ENCODE measurements at regions of chr21 and their contacts with region 1.

Region 1: DNA sequence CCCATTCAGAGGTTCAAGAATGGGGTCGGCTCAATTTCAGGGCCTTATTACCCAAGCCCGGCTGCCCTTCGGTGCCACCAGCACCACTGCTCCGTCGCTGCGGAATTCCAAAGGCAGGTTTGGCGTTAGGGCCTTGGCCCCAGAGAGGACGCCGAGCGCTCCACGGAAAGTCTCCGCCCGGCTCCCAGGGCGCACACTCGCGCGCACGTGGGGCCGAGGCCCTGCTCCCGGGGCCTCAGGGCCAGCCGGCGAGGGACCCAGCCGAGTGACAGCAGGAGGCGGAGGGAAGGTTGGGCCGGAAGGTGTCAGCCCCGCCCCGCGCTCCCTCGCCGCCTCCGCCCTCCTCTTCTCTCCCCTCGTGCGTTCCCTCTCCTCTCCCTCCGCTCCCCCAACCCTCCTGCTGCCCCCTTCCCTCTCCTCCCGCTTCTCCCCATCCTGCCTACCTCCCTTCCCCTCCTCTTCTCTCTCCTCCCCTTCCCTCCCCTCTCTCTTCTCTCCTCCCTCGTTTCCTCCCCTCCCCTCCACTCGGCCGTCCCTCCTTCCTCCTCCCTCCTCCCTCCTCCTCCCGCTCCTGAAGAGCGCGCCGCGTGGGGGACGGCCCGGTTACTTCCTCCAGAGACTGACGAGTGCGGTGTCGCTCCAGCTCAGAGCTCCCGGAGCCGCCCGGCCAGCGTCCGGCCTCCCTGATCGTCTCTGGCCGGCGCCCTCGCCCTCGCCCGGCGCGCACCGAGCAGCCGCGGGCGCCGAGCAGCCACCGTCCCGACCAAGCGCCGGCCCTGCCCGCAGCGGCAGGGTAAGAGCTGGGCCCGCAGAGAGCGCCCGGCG is at the start of gene ETS2:
- DNase-seq: peak; percentile 97
- H3K4me3 ChIP-seq: peak within 1 kb of the TSS; percentile 71 to 98 (median 96)
- H3K27ac ChIP-seq: peak within 1 kb of the TSS; percentile 92 to 98 (median 94)
- H3K4me1 ChIP-seq: peaks cover 0 to 39% (median 21%) of the 10 kb centered on the region in 4 donors
- H3K27me3 ChIP-seq: no peaks in the 10 kb centered on the region
- CTCF ChIP-seq: peak in 1 of 4 experiments; percentile 2
- EP300 ChIP-seq: no peak
- POLR2A ChIP-seq: peak; percentile 53 to 58
- total RNA-seq, gene ETS2: 32.1 to 112 (median 41.7) TPM

Region 2: DNA sequence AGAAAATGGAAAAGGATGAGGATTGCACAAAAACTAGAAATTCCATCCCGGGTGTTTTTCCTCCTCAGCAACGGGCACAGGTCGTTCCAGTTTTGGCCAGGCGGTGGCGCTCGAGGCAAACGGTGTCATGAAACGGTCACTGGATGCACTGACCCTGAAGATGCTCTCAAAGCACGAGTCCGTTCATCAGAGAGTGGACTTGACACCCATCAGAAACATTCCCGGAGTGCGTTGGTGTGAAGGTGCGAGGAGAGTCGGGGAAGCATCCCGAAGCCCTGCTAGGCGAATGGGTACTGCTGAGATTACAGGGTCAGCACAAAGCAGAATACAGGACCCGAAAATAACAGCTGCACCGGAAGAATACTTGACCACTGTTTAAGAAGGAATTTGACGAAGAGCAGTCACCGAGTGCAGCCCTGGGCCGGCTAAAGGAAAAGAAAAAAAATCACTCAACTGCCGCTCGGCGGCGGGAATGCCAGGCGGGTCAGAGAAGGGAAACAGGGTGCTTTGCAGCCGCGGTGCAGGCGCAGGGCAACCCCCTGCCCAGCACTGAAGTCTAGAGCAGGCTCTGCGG is 71.5 kb before region 1 on chr21:
- intact Hi-C with region 1: loop called (anchors 1 kb)
- DNase-seq: peak; percentile 92
- H3K4me3 ChIP-seq: peak overlapping the region in 3 of 4 donors; percentile 11 to 40 (median 38)
- H3K27ac ChIP-seq: peak overlapping the region; percentile 55 to 76 (median 75)
- H3K4me1 ChIP-seq: peaks cover 0 to 9% (median 6%) of the 10 kb centered on the region in 4 donors
- H3K27me3 ChIP-seq: no peaks in the 10 kb centered on the region
- CTCF ChIP-seq: peak; percentile 84 to 93 (median 90)
- EP300 ChIP-seq: no peak
- POLR2A ChIP-seq: no peak

Region 3: GRCh38 chr21:38755681-38756371 is 49.7 kb before region 1 on chr21:
- intact Hi-C with region 1: loop called (anchors 1 kb)
- DNase-seq: peak; percentile 86
- H3K4me3 ChIP-seq: no peak overlapping the region
- H3K27ac ChIP-seq: peak overlapping the region; percentile 64 to 89 (median 76)
- H3K4me1 ChIP-seq: peaks cover 0 to 76% (median 57%) of the 10 kb centered on the region in 4 donors
- H3K27me3 ChIP-seq: no peaks in the 10 kb centered on the region
- CTCF ChIP-seq: no peak
- EP300 ChIP-seq: peak in 1 of 4 donors; percentile 17
- POLR2A ChIP-seq: no peak

Region 4: DNA sequence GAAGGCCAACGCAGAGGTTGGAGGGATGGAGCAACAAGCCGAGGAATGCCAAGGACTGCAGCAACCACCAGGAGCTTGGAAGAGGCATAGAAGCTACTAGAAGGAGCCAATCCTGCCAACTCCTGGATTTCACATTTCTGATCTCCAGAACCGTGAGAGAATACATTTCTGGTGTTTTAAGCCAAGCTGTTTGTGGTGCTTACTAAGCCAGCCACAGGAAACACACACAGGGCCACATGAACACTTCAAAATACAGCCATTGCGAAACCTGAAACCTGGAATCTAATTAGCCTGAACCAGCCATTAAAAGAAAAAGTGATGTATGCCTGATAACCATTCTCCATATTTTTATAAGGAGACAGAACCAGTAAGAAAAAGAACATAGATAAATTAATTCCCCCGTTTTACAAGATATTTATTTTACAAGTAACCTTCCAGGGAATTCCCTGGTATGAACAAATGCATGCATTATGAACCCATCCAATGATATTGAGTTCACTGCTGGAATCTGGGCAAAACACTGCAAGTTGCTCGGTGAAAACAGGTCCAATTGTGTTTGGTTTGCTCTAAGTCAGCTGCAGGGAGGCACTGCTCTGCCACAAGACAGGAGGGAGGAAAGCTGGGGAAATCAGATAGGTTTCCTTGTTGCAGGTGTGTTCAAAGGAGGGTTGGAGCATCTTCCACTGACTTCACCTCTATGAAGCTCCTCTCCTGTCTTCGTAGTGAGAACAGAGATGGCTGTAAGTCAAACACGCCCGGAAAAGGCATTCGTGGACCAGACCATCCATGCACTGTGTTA is 70.4 kb after region 1 on chr21:
- intact Hi-C with region 1: no loop called
- DNase-seq: no peak
- H3K4me3 ChIP-seq: no peak overlapping the region
- H3K27ac ChIP-seq: no peak overlapping the region
- H3K4me1 ChIP-seq: peaks cover 0 to 5% (median 0%) of the 10 kb centered on the region in 4 donors
- H3K27me3 ChIP-seq: no peaks in the 10 kb centered on the region
- CTCF ChIP-seq: no peak
- EP300 ChIP-seq: no peak
- POLR2A ChIP-seq: no peak

Region 5: DNA sequence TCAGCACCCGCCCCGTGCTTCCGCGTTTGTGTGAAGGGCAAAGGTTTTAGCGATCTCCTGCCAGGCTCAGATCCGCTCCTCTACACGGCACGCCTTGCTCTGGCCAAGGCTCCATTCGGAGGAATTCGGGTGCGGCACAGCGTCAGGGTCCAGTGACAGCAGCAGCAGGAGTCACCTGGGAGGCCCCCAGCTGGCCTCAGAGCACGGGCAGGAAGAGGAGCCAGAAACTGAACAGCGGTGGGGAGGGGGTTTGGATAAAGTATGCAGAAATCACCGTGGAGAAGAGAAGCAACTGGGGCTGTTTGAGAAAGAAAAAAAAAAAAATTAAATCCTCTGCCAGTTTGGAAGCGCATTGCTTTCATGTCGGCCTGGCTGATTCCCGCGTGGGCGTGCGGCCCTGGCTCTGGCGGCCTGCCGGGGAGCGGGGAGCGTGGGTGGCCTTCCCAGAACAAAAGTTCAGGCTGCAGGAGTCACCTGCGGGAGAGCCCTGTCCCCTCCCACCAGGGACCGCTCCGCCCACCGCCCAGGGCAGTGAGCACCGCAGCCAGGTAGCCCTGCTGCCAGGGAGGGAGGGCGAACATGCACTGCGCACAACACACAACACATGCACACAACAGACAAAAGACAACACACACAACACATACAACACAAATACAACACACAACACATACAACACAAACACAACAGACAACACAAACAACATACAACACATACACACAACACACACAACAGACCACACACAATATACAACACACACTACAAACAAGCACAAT is 107.8 kb after region 1 on chr21:
- intact Hi-C with region 1: loop called (anchors 5 kb)
- DNase-seq: peak; percentile 91
- H3K4me3 ChIP-seq: peak overlapping the region in 3 of 4 donors; percentile 11 to 17 (median 16)
- H3K27ac ChIP-seq: peak overlapping the region; percentile 54 to 82 (median 79)
- H3K4me1 ChIP-seq: peaks cover 0 to 33% (median 23%) of the 10 kb centered on the region in 4 donors
- H3K27me3 ChIP-seq: no peaks in the 10 kb centered on the region
- CTCF ChIP-seq: no peak
- EP300 ChIP-seq: no peak
- POLR2A ChIP-seq: peak in 1 of 2 donors; percentile 49

Region 6: GRCh38 chr21:39125752-39126485 is 320.4 kb after region 1 on chr21:
- intact Hi-C with region 1: loop called (anchors 1 kb)
- DNase-seq: peak; percentile 78
- H3K4me3 ChIP-seq: no peak overlapping the region
- H3K27ac ChIP-seq: peak overlapping the region in 3 of 4 donors; percentile 14 to 51 (median 45)
- H3K4me1 ChIP-seq: peaks cover 4 to 18% (median 9%) of the 10 kb centered on the region in 4 donors
- H3K27me3 ChIP-seq: no peaks in the 10 kb centered on the region
- CTCF ChIP-seq: peak; percentile 41 to 67 (median 60)
- EP300 ChIP-seq: no peak
- POLR2A ChIP-seq: no peak

Measured in sigmoid colon (tissue), 7 donors.